ENCODE measurements at regions of chr11 and their contacts with region 1.

Region 1: DNA sequence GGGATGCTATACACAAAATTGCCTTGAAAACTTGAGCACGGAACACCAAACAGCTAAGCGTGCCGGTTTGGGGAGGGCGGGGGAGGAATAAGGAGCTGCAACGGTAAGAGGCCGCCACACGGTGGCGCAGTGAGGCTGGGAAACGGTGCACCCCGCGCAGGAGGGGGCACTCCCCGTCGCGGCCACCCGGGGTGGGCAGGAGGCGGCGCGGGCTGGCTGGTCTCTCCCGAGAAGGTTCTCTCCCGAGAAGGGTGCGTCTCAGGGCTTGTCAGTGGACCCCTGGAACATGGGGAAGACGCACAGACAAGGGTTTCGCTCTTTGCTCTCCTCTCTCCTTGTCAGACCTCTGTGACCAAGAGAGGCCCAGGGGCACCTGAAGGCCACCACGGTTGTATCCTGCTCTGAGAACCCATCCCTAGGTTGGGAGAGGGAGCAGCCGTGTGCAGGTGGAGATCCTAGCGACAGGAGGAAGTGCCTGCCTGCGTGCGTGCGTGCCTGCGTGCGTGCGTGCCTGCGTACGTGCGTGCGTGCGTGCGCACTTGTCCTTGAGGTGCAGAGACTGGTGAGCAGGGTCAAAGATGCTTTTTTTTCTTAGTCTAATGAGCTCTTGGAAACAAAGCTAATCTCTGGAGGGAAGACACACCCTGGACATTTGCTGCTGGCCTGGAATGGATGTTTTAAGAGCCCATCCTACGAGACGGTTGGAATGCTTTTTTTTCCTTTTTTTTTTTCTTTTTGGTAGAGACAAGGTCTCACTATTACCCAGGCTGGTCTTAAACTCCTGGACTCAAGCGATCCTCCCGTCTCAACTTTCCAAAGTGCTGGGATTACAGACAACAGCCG is 18.1 kb upstream of the JAM3 start:
- DNase-seq: peak; percentile 73 to 88 (median 87)
- ATAC-seq: peak; percentile 76
- H3K4me3 ChIP-seq: no peak overlapping the region
- H3K27ac ChIP-seq: no peak overlapping the region
- H3K4me1 ChIP-seq: peaks cover 3% of the 10 kb centered on the region
- H3K27me3 ChIP-seq: no peaks in the 10 kb centered on the region

Region 2: GRCh38 chr11:133927690-133928627 is 122.8 kb before region 1 on chr11:
- intact Hi-C with region 1: loop called in 2 of 4 experiments (anchors 5 to 10 kb)
- DNase-seq: peak; percentile 71 to 87 (median 78)
- ATAC-seq: peak; percentile 81 to 89
- H3K4me3 ChIP-seq: no peak overlapping the region
- H3K27ac ChIP-seq: no peak overlapping the region
- H3K4me1 ChIP-seq: no peaks in the 10 kb centered on the region
- H3K27me3 ChIP-seq: no peaks in the 10 kb centered on the region

Region 3: DNA sequence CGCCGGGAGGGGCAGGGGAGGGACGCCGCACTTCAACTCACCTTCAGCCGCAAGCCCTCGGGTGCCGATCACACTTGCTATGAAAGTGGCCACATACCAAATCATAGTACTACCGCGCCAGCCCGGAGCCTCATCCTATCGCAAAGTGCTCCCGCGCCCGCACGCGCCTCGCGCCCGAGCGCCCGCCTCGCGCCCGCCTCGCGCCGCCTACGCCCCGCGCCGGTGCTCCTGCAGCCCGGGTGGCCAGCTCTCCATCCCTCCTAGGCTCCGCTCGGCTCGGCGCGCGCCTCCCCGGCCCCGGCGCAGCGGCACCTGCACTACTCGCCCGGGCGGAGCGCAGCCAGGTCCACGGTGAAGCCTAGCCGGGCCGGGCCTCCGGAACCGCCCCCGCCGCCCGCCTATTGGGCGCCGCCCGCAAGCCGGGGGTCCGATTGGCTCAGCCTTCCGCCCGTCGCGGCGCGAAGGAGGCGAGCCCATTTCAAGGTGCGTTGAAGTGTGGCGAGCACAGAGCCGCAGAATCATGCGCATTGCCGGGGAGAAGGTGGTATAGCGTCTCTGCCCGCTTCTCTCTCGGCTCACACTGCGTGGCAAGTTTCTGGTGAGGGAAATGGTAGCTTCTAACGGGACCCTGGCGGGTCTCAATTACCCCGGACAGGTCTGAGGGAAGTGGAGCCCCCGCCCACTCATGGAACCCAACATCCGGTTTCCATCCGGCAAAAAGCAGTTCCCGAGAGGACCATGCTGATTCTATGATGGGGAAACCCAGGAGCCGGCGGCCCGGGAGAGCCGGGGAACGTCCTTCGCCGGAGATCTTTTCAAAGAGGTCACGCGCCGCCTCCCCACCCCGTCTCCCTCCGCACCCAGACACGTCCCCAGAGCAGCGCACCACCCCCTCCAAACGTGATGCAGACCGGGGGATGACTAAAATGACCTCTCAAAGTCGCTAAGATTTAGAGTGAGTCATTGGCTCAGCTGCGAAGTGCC is 93.8 kb before region 1 on chr11 and contains the start of gene IGSF9B:
- intact Hi-C with region 1: loop called in 2 of 4 experiments (anchors 10 kb)
- DNase-seq: peak; percentile 88 to 95 (median 94)
- ATAC-seq: peak; percentile 92 to 93
- H3K4me3 ChIP-seq: peak within 1 kb of the TSS; percentile 51
- H3K27ac ChIP-seq: peak within 1 kb of the TSS; percentile 65
- H3K4me1 ChIP-seq: peaks cover 7% of the 10 kb centered on the region
- H3K27me3 ChIP-seq: no peaks in the 10 kb centered on the region
- total RNA-seq, gene IGSF9B: 40.1 to 58.9 (median 54.3) TPM

Region 4: GRCh38 chr11:133966921-133967598 is 83.7 kb before region 1 on chr11:
- intact Hi-C with region 1: loop called in 1 of 4 experiments (anchors 10 kb)
- DNase-seq: peak; percentile 71 to 87 (median 87)
- ATAC-seq: peak; percentile 60 to 72
- H3K4me3 ChIP-seq: no peak overlapping the region
- H3K27ac ChIP-seq: no peak overlapping the region
- H3K4me1 ChIP-seq: no peaks in the 10 kb centered on the region
- H3K27me3 ChIP-seq: no peaks in the 10 kb centered on the region

Region 5: GRCh38 chr11:134132793-134133192 is 82.0 kb after region 1 on chr11:
- intact Hi-C with region 1: loop called in 1 of 4 experiments (anchors 5 kb)
- DNase-seq: no peak
- ATAC-seq: no peak
- H3K4me3 ChIP-seq: no peak overlapping the region
- H3K27ac ChIP-seq: no peak overlapping the region
- H3K4me1 ChIP-seq: no peaks in the 10 kb centered on the region
- H3K27me3 ChIP-seq: no peaks in the 10 kb centered on the region

Region 6: DNA sequence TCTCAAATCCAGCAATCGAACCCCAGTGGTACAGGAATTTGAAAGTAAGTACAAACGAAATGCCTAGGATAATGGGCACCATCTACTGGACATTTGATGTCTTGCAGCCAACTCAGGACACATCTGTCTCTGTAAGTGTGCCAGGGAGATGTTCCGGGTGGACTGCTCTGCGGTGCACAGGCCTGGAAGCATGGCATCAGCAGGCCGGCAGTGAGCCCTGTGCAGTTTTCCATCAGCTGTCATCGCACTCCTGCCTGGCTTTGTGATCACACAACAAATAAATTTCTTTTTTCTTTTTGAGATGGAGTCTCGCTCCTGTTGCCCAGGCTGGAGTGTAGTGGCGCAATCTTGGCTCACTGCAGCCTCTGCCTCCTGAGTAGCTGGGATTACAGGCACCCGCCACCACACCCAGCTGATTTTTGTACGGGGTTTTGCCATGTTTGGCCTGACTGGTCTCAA is 89.1 kb after region 1 on chr11:
- intact Hi-C with region 1: loop called (anchors 1 to 5 kb)
- DNase-seq: peak; percentile 40 to 73 (median 64)
- ATAC-seq: peak; percentile 87 to 89
- H3K4me3 ChIP-seq: no peak overlapping the region
- H3K27ac ChIP-seq: no peak overlapping the region
- H3K4me1 ChIP-seq: no peaks in the 10 kb centered on the region
- H3K27me3 ChIP-seq: no peaks in the 10 kb centered on the region